ENCODE measurements at regions of chr7 and their contacts with region 1.

Region 1: DNA sequence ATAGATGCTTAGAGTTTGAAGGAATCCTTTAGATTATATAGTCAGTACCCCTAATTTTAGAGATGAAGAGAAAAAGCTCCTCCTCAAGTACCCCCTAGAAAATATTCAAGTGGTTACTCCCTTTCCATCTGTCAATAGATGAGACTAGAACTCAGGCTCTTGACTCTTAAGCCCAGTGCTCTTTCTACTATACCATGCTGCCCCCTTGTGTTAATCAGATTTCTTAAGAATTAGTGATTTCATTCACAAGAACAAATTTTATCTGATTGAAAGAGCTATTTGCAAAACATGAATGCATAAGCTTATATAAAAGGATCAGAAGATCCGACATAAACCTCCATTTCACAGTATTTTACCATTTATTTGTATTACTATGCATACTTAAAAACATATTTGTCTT is 179.3 kb downstream of the TFEC start:
- DNase-seq: peak; percentile 66
- H3K4me3 ChIP-seq: no peak overlapping the region
- H3K27ac ChIP-seq: no peak overlapping the region
- H3K4me1 ChIP-seq: no peaks in the 10 kb centered on the region
- H3K27me3 ChIP-seq: peaks cover 0 to 2% of the 10 kb centered on the region in 2 experiments
- CTCF ChIP-seq: peak; percentile 9 to 12
- POLR2A ChIP-seq: no peak

Region 2: GRCh38 chr7:114026486-114027089 is 1824.7 kb before region 1 on chr7:
- CTCF ChIA-PET with region 1: interaction called, 30 read pairs
- POLR2A ChIA-PET with region 1: no interaction called
- dilution Hi-C with region 1: no loop called
- intact Hi-C with region 1: loop called (anchors 2 kb)
- DNase-seq: peak; percentile 64
- H3K4me3 ChIP-seq: no peak overlapping the region
- H3K27ac ChIP-seq: no peak overlapping the region
- H3K4me1 ChIP-seq: no peaks in the 10 kb centered on the region
- H3K27me3 ChIP-seq: no peaks in the 10 kb centered on the region
- CTCF ChIP-seq: peak; percentile 24 to 36
- POLR2A ChIP-seq: no peak

Region 3: DNA sequence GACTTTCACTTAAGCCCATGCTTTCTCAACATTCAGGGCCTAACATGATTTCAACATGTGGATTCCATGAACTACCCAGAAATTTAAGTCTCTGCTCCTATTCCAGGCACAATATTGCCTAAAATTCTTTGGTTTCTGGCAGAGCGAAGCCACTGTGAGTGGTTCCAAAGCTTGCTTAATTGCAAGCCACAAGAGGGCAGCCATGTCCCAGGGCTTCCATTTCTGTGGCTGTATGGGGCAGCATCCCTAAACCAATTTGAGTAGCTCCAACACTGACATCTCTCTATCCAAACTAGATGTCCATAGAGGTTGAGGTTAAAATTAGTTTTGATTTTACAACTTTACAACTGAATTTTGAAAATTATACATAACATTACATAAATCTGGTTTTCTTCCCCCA is 985.7 kb before region 1 on chr7:
- CTCF ChIA-PET with region 1: interaction called, 112 read pairs
- POLR2A ChIA-PET with region 1: no interaction called
- dilution Hi-C with region 1: no loop called
- intact Hi-C with region 1: loop called (anchors 1 kb)
- DNase-seq: peak; percentile 64
- H3K4me3 ChIP-seq: no peak overlapping the region
- H3K27ac ChIP-seq: no peak overlapping the region
- H3K4me1 ChIP-seq: no peaks in the 10 kb centered on the region
- H3K27me3 ChIP-seq: no peaks in the 10 kb centered on the region
- CTCF ChIP-seq: peak; percentile 65 to 67
- POLR2A ChIP-seq: no peak

Region 4: GRCh38 chr7:115356139-115356746 is 495.0 kb before region 1 on chr7:
- CTCF ChIA-PET with region 1: interaction called, 5 read pairs
- POLR2A ChIA-PET with region 1: no interaction called
- dilution Hi-C with region 1: no loop called
- intact Hi-C with region 1: loop called (anchors 2 kb)
- DNase-seq: peak; percentile 16
- H3K4me3 ChIP-seq: no peak overlapping the region
- H3K27ac ChIP-seq: no peak overlapping the region
- H3K4me1 ChIP-seq: no peaks in the 10 kb centered on the region
- H3K27me3 ChIP-seq: no peaks in the 10 kb centered on the region
- CTCF ChIP-seq: peak; percentile 24 to 43
- POLR2A ChIP-seq: no peak

Region 5: DNA sequence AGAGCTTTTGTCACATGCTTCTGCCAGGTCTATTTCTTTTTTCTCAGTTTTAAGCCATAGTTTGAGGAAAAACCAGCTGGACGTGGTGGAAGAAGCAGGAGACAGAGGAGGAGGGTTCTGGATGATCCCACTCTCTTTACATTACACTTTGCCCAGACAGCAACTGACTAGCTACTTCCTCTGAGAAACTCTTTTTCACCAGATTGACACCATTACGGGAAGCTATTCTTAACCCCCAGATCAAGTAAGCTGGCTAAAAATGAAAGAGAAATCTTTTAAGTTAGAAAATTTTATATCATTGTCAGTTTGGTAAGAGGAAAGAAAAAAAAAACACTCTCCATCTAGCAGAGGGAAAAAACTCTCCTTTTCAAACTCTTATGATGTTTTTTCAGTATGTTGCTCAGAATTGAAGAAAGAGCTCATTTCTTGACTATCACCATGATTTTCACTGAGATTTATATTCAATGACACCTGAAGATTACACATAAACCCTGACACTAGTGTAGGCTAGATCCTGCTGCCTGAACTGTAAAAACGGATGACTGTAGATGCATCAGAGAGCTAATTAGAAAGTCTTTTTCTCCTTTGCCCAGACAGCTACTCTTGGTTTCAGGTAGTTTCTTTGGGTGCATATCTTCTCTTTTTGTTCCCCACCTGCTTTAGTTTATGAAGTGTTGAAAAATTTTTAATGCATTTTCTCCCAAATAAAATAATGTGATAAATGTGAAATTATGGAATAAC is 23.8 kb before region 1 on chr7:
- CTCF ChIA-PET with region 1: interaction called, 11 read pairs
- POLR2A ChIA-PET with region 1: no interaction called
- dilution Hi-C with region 1: no loop called
- intact Hi-C with region 1: no loop called
- DNase-seq: no peak
- H3K4me3 ChIP-seq: no peak overlapping the region
- H3K27ac ChIP-seq: no peak overlapping the region
- H3K4me1 ChIP-seq: no peaks in the 10 kb centered on the region
- H3K27me3 ChIP-seq: peaks cover 0 to 2% of the 10 kb centered on the region in 2 experiments
- CTCF ChIP-seq: no peak
- POLR2A ChIP-seq: no peak

Region 6: GRCh38 chr7:115910541-115911164 is 59.4 kb after region 1 on chr7:
- CTCF ChIA-PET with region 1: interaction called, 9 read pairs
- POLR2A ChIA-PET with region 1: no interaction called
- dilution Hi-C with region 1: no loop called
- intact Hi-C with region 1: loop called (anchors 2 kb)
- DNase-seq: peak; percentile 64
- H3K4me3 ChIP-seq: no peak overlapping the region
- H3K27ac ChIP-seq: no peak overlapping the region
- H3K4me1 ChIP-seq: no peaks in the 10 kb centered on the region
- H3K27me3 ChIP-seq: no peaks in the 10 kb centered on the region
- CTCF ChIP-seq: peak in 1 of 2 donors; percentile 53
- POLR2A ChIP-seq: no peak

Region 7: DNA sequence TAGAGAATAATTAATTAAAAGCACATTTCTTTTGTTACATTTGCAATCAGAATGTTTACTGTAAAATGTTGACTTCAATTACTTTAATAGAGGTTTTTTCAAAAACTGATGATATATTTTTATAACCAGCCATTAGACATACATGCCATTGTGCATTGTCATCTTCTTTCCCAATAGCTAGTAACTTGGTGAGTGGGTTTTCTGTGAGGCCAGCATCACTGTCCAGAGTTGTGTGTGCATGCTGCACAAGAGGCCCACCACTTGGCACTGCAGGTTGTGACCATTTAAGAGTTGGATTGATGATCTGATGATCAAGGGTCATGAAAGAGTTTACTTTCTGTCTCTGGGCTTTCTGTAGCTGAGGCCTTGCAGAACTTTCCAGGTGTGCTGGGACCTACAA is 132.8 kb after region 1 on chr7:
- CTCF ChIA-PET with region 1: no interaction called
- POLR2A ChIA-PET with region 1: no interaction called
- dilution Hi-C with region 1: no loop called
- intact Hi-C with region 1: no loop called
- DNase-seq: no peak
- H3K4me3 ChIP-seq: no peak overlapping the region
- H3K27ac ChIP-seq: no peak overlapping the region
- H3K4me1 ChIP-seq: no peaks in the 10 kb centered on the region
- H3K27me3 ChIP-seq: no peaks in the 10 kb centered on the region
- CTCF ChIP-seq: no peak
- POLR2A ChIP-seq: no peak

Measured in endothelial cell of umbilical vein (primary cell).